Psoas muscle (tissue), 8 donors: ENCODE measurements at regions of chr6 and their contacts with region 1.

Region 1: GRCh38 chr6:41200296-41200900 is 551 bp downstream of the TREML2 start:
- DNase-seq: no peak
- ATAC-seq: peak in 3 of 4 donors; percentile 24 to 38 (median 37)
- H3K4me3 ChIP-seq: no peak overlapping the region
- H3K27ac ChIP-seq: no peak overlapping the region
- H3K4me1 ChIP-seq: no peaks in the 10 kb centered on the region
- H3K27me3 ChIP-seq: peaks cover 0 to 1% (median 0%) of the 10 kb centered on the region in 3 donors
- CTCF ChIP-seq: no peak

Region 2: GRCh38 chr6:41153972-41154608 is 46.3 kb before region 1 on chr6 and contains the start of gene TREML1:
- intact Hi-C with region 1: loop called in 1 of 2 experiments (anchors 1 kb)
- DNase-seq: no peak
- ATAC-seq: no peak
- H3K4me3 ChIP-seq: no peak within 1 kb of the TSS
- H3K27ac ChIP-seq: no peak within 1 kb of the TSS
- H3K4me1 ChIP-seq: no peaks in the 10 kb centered on the region
- H3K27me3 ChIP-seq: peaks cover 0 to 2% (median 0%) of the 10 kb centered on the region in 3 donors
- CTCF ChIP-seq: no peak
- total RNA-seq, gene TREML1: 0.39 TPM in 1 of 4 donors, not detected in the others

Region 3: GRCh38 chr6:41271901-41272395 is 71.5 kb after region 1 on chr6:
- intact Hi-C with region 1: no loop called
- DNase-seq: peak; percentile 32 to 57
- ATAC-seq: peak in 3 of 4 donors; percentile 27 to 37 (median 36)
- H3K4me3 ChIP-seq: no peak overlapping the region
- H3K27ac ChIP-seq: no peak overlapping the region
- H3K4me1 ChIP-seq: no peaks in the 10 kb centered on the region
- H3K27me3 ChIP-seq: peaks cover 0 to 14% (median 2%) of the 10 kb centered on the region in 3 donors
- CTCF ChIP-seq: no peak

Region 4: GRCh38 chr6:41371461-41371991 is 171.1 kb after region 1 on chr6:
- intact Hi-C with region 1: no loop called
- DNase-seq: peak in 1 of 2 donors; percentile 51
- ATAC-seq: peak; percentile 36 to 57 (median 42)
- H3K4me3 ChIP-seq: peak overlapping the region; percentile 44
- H3K27ac ChIP-seq: no peak overlapping the region
- H3K4me1 ChIP-seq: peaks cover 16% of the 10 kb centered on the region
- H3K27me3 ChIP-seq: peaks cover 0 to 83% (median 53%) of the 10 kb centered on the region in 3 donors
- CTCF ChIP-seq: no peak